Activated CD8-positive, alpha-beta T cell treated with anti-CD3 and anti-CD28 coated beads for 36 hours (primary cell): ENCODE measurements at regions of chr6 and their contacts with region 1.

Region 1: DNA sequence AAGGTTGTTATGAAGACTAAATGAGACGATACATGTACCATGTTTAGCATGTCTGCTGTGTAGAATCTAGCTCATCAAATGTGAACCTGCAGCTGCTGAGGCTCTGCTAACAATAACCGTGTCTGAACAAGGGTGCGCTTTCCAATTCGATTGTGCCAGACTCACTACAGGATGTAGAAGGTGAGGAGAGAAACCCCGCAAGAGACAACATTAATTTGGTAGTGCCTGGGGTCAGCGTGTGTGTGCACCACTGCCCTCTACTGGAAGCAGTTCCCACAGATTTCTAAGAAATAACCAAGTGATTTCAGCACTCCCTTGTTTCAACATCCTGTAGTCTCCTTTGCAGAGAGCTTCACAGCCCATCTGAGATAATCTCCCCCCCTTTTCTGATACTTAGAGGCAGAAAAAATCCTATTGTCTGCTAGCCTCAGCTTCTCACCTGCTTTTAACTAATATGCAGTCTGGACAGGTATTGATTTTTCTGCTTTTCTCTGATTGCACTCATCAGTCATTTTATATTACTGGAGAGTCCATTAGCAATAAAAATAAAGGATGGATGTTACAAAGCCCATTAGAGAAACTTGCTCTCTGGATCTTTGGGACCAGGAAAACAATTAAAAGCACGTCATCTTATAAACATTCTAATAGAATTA is 96.7 kb upstream of the BACH2 start:
- DNase-seq: peak; percentile 90
- ATAC-seq: peak; percentile 55
- H3K4me3 Mint-ChIP-seq: no peak overlapping the region
- H3K27ac Mint-ChIP-seq: peak overlapping the region; percentile 40
- H3K4me1 Mint-ChIP-seq: peaks cover 63% of the 10 kb centered on the region
- H3K27me3 Mint-ChIP-seq: no peaks in the 10 kb centered on the region
- CTCF ChIP-seq: peak; percentile 77

Region 2: DNA sequence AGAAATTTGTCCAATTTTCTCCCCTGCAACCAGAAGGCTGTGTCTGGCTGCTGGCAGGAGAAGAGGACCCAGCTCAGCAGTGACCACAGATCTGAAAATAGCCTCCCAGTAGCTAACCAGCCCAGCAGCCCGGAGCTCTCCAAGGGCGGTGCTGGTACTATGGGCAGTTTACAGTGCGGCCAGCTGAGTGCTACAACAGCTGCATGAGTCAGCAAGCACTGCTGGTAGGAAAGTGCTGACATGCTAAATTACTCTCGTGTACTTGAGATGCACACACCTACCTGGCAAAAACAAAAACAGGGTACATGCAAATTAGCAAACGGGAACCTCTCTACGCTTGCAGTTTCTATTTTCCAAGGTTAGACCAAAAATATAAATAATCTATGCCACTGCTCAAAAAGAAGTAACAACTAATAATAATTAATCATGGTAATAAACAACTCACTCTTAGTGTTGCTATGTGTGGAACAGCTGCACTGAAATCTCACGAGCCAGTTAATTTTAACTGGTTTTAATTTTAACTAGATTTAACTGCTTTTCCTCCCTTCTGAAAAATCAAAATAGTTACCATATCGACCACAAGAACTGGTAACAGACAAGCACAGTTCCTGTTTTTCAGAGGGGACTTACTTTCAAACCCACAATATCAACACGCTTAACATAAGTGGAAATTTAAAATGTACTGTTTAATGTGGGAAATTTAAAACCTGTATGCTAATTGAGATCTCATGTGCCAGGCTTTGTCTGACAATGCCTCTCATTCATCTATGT is 107.6 kb before region 1 on chr6:
- CTCF ChIA-PET with region 1: interaction called, 43 read pairs
- POLR2A ChIA-PET with region 1: interaction called, 61 read pairs
- intact Hi-C with region 1: loop called (anchors 2 kb)
- DNase-seq: peak; percentile 80
- ATAC-seq: peak; percentile 40
- H3K4me3 Mint-ChIP-seq: peak overlapping the region; percentile 64
- H3K27ac Mint-ChIP-seq: peak overlapping the region; percentile 94
- H3K4me1 Mint-ChIP-seq: peaks cover 87% of the 10 kb centered on the region
- H3K27me3 Mint-ChIP-seq: no peaks in the 10 kb centered on the region
- CTCF ChIP-seq: no peak

Region 3: DNA sequence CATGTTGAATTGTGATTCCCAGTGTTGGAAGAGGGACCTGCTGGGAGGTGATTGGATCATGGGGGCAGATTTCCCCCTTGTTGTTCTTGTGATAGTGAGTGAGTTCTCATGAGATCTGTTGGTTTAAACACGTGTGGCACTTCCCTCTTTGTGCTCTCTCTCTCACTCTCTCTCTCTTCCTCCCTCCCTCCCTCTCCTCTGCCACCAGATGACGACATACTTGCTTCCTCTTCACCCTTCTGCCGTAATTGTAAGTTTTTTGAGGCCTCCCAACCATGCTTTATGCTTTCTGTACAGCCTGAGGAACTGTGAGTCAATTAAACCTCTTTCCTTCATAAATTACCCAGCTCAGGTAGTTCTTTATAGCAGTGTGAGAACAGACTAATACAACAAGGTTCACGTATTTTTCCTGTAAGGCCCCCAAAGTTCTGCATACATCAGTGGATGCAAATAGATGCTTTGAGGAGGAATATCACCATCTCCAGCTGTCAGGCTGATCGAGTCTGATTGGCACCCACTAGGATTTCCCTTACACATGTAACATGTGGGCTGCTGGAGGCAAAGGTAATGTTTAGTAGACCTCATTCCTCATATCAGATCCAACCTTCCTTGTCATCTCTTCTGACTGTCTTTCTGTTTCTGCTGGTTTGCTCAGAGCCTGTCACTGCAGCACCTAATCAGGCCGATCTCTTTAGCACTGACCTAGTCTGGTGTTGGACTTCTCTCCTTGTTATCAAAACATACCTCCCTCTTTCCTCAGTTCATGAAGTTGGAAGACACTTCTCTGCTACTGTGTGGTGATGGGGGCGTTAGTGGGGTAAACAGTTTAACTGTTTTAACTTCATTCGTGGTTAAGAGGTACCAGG is 42.4 kb before region 1 on chr6:
- CTCF ChIA-PET with region 1: interaction called, 13 read pairs
- POLR2A ChIA-PET with region 1: no interaction called
- intact Hi-C with region 1: loop called (anchors 5 kb)
- DNase-seq: peak; percentile 63
- ATAC-seq: peak; percentile 74
- H3K4me3 Mint-ChIP-seq: peak overlapping the region; percentile 59
- H3K27ac Mint-ChIP-seq: peak overlapping the region; percentile 93
- H3K4me1 Mint-ChIP-seq: peaks cover 49% of the 10 kb centered on the region
- H3K27me3 Mint-ChIP-seq: no peaks in the 10 kb centered on the region
- CTCF ChIP-seq: no peak

Region 4: DNA sequence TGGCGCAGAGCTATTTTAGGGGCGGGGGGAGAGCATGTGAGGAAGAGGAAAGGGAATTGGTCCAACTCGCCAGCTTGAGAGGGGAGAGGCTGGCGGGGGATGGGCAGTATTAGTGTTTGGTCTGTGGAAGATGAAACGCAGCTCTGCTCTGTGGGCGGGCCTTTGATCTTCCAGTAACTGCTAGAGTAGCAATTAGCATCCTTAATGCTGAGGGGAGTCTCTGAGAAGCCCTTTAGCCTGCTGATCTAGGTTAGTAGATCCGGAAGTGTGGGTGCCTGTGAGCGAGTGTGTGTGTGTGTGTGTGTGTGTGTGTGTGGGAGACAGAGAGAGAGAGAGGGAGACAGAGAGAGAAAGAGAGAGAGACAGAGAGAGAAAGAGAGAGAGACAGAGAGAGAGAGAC is 20.5 kb after region 1 on chr6:
- CTCF ChIA-PET with region 1: interaction called, 34 read pairs
- POLR2A ChIA-PET with region 1: interaction called, 11 read pairs
- intact Hi-C with region 1: loop called (anchors 1 kb)
- DNase-seq: peak; percentile 95
- ATAC-seq: peak; percentile 77
- H3K4me3 Mint-ChIP-seq: peak overlapping the region; percentile 60
- H3K27ac Mint-ChIP-seq: peak overlapping the region; percentile 95
- H3K4me1 Mint-ChIP-seq: peaks cover 61% of the 10 kb centered on the region
- H3K27me3 Mint-ChIP-seq: no peaks in the 10 kb centered on the region
- CTCF ChIP-seq: no peak

Region 5: GRCh38 chr6:90458353-90459224 is 65.2 kb after region 1 on chr6:
- CTCF ChIA-PET with region 1: interaction called, 22 read pairs
- POLR2A ChIA-PET with region 1: interaction called, 6 read pairs
- intact Hi-C with region 1: no loop called
- DNase-seq: peak; percentile 93
- ATAC-seq: peak; percentile 95
- H3K4me3 Mint-ChIP-seq: peak overlapping the region; percentile 31
- H3K27ac Mint-ChIP-seq: peak overlapping the region; percentile 93
- H3K4me1 Mint-ChIP-seq: peaks cover 74% of the 10 kb centered on the region
- H3K27me3 Mint-ChIP-seq: no peaks in the 10 kb centered on the region
- CTCF ChIP-seq: no peak

Region 6: GRCh38 chr6:90478789-90479602 is 85.6 kb after region 1 on chr6:
- CTCF ChIA-PET with region 1: interaction called, 113 read pairs
- POLR2A ChIA-PET with region 1: interaction called, 12 read pairs
- intact Hi-C with region 1: loop called (anchors 1 kb)
- DNase-seq: peak; percentile 90
- ATAC-seq: peak; percentile 90
- H3K4me3 Mint-ChIP-seq: no peak overlapping the region
- H3K27ac Mint-ChIP-seq: peak overlapping the region; percentile 66
- H3K4me1 Mint-ChIP-seq: peaks cover 52% of the 10 kb centered on the region
- H3K27me3 Mint-ChIP-seq: no peaks in the 10 kb centered on the region
- CTCF ChIP-seq: peak; percentile 97